H1 (cell line): ENCODE measurements at regions of chr9 and their contacts with region 1.

Region 1: DNA sequence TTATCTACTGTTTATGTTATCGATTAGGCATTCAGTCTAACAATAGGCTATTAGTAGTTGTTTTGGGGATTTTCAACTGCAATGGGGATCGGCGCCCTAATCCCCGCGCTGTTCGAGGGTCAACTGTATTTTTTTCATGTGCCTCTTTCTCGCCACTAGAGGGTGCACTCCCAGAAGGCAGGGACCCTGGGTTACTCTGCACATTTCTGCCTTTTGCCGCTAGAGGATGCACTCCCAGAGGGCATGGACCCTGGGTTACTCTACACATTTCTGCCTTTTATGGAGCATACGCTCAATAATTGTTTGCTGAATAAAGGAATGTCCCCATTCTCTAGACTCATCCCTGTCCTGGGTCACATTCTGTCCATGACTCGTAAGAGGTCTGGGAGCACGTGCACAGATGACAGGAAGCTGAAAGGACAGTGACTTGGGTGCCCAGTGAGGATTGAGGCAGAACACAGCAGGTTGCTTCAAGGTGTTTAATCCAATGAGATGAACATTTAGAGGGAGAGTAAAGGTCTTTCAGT is 27.9 kb upstream of the RECK start:
- DNase-seq: peak; percentile 50 to 77
- H3K4me3 ChIP-seq: no peak overlapping the region
- H3K27ac ChIP-seq: no peak overlapping the region
- H3K4me1 ChIP-seq: no peaks in the 10 kb centered on the region
- H3K27me3 ChIP-seq: peaks cover 0 to 4% (median 0%) of the 10 kb centered on the region in 4 experiments; a peak in 2 of 7 replicates
- CTCF ChIP-seq: peak; percentile 98 to 100 (median 100)
- EP300 ChIP-seq: no peak
- POLR2A ChIP-seq: no peak
- RAD21 ChIP-seq: peak; percentile 84 to 85

Region 2: DNA sequence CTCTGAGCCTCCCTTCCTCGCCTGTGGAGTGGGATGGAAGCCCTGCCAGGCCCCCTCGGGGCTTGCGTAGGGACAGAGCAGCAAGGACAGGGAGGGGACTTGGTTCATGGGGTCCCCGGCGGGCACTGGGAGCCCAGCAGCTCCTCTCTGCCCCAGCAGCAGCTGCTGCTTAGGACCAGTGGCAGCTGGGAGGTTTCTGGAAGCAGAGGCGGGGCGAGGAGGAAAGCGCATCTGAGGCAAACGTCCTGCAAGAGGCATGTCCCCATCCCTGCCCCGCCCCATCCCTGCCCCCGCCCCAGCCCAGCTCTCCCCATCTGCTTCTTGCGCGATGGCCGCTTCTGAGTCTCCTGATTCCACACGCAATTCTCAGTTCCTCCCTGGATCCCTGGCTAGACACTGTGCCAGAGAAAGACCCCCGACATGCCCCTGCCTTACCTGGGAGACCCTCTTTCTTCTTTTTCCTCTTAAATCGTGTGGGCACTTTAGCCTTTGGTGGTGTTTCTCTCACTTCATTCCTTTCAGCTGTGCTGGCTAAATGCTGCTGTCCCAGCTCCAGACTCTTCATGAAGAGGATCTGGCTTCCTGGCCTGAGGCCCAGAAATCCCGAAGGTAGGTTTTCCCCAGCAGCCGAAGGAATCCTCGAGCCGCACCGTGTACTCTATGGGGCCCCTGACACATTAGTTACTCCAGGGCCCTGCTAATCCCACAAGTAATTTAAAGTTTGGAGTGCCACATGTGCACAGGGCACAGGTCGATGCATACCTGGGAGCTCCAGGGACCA is 46.5 kb before region 1 on chr9:
- CTCF ChIA-PET with region 1: interaction called, 57 read pairs
- POLR2A ChIA-PET with region 1: interaction called, 4 read pairs
- DNase-seq: peak in 1 of 2 experiments; percentile 55
- H3K4me3 ChIP-seq: no peak overlapping the region
- H3K27ac ChIP-seq: no peak overlapping the region
- H3K4me1 ChIP-seq: peaks cover 0 to 3% (median 1%) of the 10 kb centered on the region in 4 experiments; a peak in 3 of 7 replicates
- H3K27me3 ChIP-seq: no peaks in the 10 kb centered on the region; a peak in 1 of 7 replicates
- CTCF ChIP-seq: no peak
- EP300 ChIP-seq: no peak
- POLR2A ChIP-seq: no peak
- RAD21 ChIP-seq: no peak

Region 3: GRCh38 chr9:35996358-35996975 is 12.4 kb before region 1 on chr9:
- CTCF ChIA-PET with region 1: interaction called, 18 read pairs
- POLR2A ChIA-PET with region 1: no interaction called
- DNase-seq: peak in 1 of 2 experiments; percentile 17
- H3K4me3 ChIP-seq: no peak overlapping the region
- H3K27ac ChIP-seq: no peak overlapping the region
- H3K4me1 ChIP-seq: peaks cover 0 to 4% (median 0%) of the 10 kb centered on the region in 4 experiments; a peak in 1 of 7 replicates
- H3K27me3 ChIP-seq: no peaks in the 10 kb centered on the region
- CTCF ChIP-seq: no peak
- EP300 ChIP-seq: no peak
- POLR2A ChIP-seq: no peak
- RAD21 ChIP-seq: no peak

Region 4: DNA sequence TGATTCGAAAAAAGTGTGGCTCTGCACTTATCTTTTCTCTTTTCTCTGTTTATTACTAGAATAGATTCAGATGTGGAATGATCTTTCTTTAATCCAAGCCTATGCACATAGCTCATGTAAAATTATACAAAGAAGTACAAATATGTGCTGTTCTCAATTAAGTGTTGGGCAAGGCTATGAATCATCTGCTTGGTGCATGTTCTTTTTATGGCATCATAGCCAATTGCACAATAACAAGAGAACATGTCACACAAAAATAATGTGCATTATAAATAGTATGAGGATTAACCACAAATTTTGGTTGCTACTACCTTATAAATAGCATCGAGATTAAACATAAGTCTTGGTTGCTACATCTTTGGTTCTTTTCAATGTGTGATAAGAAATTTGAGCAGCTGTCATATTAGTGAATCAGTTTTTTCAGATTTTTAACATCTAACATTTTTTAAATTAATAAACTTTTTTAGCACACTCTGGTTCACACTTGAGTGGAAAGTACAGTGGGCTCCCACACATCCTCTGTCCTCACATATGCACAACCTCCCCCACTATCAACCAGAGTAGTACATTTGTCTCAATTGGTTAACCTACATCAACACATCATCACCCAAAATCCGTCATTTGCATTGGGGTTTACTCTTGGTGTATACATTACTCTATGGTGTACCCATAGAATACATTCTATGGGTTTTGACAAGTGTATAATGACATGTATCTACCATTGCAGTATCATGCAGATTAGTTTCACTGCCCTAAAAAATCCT is 21.1 kb after region 1 on chr9:
- CTCF ChIA-PET with region 1: interaction called, 68 read pairs
- POLR2A ChIA-PET with region 1: no interaction called
- DNase-seq: no peak
- H3K4me3 ChIP-seq: no peak overlapping the region
- H3K27ac ChIP-seq: no peak overlapping the region
- H3K4me1 ChIP-seq: no peaks in the 10 kb centered on the region
- H3K27me3 ChIP-seq: no peaks in the 10 kb centered on the region
- CTCF ChIP-seq: no peak
- EP300 ChIP-seq: no peak
- POLR2A ChIP-seq: no peak
- RAD21 ChIP-seq: no peak

Region 5: DNA sequence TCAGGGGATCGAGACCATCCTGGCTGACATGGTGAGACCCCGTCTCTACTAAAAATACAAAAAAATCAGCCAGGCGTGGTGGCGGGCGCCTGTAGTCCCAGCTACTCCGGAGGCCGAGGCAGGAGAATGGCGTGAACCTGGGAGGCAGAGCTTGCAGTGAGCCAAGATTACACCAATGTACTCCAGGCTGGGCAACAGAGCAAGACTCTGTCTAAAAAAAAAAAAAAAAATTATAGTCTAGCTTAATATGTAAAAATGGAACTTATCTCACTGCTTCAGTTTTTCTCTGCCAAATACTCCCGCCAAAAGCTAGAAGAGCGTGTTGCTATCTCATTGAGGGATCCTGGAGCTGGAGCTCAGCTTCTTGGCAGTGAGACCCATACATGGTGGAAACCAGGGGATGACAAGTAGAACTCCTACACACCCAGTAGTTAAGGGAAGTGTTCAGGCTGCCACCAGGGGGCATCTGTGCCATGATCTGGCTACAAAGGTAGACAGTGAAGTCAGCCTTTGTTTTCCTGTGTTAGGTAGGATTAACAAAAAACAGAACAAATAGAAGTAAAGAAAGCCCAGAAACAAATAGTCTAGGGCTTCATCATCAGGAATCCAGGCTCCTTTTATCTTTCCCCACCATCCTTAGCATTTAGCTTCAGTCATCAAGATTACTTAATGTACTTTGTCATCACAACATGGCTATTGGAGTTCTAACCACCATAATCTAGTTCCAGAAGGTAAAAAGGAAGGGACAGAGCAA is 94.1 kb after region 1 on chr9:
- CTCF ChIA-PET with region 1: interaction called, 13 read pairs
- POLR2A ChIA-PET with region 1: no interaction called
- DNase-seq: peak; percentile 49 to 85
- H3K4me3 ChIP-seq: no peak overlapping the region
- H3K27ac ChIP-seq: no peak overlapping the region
- H3K4me1 ChIP-seq: peaks cover 0 to 3% (median 2%) of the 10 kb centered on the region in 4 experiments; a peak in 4 of 7 replicates
- H3K27me3 ChIP-seq: no peaks in the 10 kb centered on the region
- CTCF ChIP-seq: peak; percentile 71 to 89 (median 80)
- EP300 ChIP-seq: no peak
- POLR2A ChIP-seq: no peak
- RAD21 ChIP-seq: peak; percentile 78 to 83

Region 6: GRCh38 chr9:36166101-36166927 is 157.5 kb after region 1 on chr9:
- CTCF ChIA-PET with region 1: interaction called, 20 read pairs
- POLR2A ChIA-PET with region 1: no interaction called
- DNase-seq: peak; percentile 25 to 96
- H3K4me3 ChIP-seq: peak overlapping the region; percentile 29 to 62 (median 39)
- H3K27ac ChIP-seq: no peak overlapping the region
- H3K4me1 ChIP-seq: peaks cover 11 to 25% (median 17%) of the 10 kb centered on the region in 4 experiments
- H3K27me3 ChIP-seq: no peaks in the 10 kb centered on the region
- CTCF ChIP-seq: peak; percentile 68 to 91 (median 84)
- EP300 ChIP-seq: no peak; a peak in 1 of 3 replicates
- POLR2A ChIP-seq: no peak
- RAD21 ChIP-seq: peak; percentile 85